Activated CD4-positive, alpha-beta T cell treated with anti-CD3 and anti-CD28 coated beads for 36 hours (primary cell): ENCODE measurements at regions of chr2 and their contacts with region 1.

Region 1: GRCh38 chr2:48332286-48332685 is 197.7 kb upstream of the STON1 start:
- DNase-seq: no peak
- ATAC-seq: peak; percentile 53
- H3K4me3 Mint-ChIP-seq: no peak overlapping the region
- H3K27ac Mint-ChIP-seq: no peak overlapping the region
- H3K4me1 Mint-ChIP-seq: peaks cover 52% of the 10 kb centered on the region
- H3K27me3 Mint-ChIP-seq: no peaks in the 10 kb centered on the region

Region 2: DNA sequence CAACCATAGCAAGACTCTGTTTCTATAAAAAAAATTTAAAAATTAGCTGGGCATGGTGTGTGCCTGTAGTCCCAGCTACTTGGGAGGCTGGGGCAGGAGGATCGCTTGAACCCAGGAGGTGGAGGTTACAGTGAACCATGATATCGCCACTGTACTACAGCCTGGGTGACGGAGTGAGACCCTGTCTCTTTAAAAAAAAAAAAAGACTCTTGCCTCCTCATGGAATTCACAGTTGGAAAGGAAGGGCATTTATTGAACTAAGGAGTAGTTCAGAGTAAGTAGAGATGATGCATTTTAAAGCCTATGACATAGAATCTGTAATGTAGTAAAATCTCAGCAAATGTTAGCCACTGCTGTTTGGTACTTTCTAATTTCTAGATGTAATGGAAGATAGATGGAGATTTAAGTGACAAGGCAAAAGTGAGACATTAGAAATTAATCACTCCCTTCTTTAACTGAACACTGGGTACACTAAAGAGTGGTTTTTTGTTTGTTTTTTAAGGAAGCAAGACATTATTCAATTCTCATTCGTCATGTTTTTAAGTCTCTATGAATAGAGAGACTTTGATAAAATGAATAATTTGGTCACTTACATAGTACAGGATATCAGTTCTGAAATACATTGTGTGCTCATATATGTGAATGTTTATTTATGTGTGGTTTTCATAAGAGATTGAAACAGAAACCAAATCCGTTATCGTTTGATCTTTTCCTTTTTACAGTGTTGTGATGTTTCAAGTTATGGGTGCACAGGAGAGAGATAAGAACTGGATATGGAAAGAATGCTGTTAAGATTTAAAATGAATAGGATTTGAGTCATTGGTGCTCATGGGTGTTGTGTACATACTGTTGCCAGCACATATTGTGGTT is 11.5 kb after region 1 on chr2:
- CTCF ChIA-PET with region 1: interaction called, 20 read pairs
- POLR2A ChIA-PET with region 1: no interaction called
- intact Hi-C with region 1: no loop called
- DNase-seq: no peak
- ATAC-seq: peak; percentile 95
- H3K4me3 Mint-ChIP-seq: peak overlapping the region; percentile 40
- H3K27ac Mint-ChIP-seq: peak overlapping the region; percentile 78
- H3K4me1 Mint-ChIP-seq: peaks cover 50% of the 10 kb centered on the region
- H3K27me3 Mint-ChIP-seq: no peaks in the 10 kb centered on the region